ENCODE measurements at regions of chr2 and their contacts with region 1.

Region 1: DNA sequence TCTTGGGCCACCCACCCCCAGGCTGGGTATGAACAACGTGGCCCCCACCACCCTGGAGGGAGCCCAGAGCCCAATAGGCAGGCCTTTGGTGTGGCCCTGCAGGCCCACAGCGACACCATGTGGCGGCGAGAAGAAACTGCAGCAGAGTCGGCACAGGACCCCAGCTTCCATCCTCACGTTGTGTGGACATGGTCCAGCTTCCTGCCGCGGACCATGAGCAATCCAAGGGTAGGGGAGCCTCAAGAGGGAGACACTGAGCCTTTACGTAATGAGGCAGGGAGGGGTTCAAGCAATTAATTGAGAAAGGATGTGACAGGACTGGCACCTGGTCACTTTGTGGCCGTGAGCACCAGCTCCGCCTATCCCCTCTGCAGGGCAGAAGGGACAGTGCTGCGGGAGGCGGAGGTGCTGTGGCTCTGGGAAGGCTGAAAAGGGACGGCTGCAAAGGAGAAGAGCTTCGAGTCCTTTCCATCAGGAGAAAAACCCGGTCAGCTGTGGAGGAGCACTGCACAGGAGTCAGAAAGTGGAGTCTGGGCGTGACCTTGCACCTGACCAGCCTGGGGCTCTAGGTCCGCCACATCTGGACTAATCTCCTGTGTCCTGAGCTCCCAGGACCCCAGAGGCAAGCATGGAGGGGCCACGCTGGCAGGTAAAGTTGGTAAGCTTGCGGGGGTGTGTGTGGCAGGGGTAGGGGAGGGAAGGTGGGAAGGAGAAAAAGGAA is 44.8 kb downstream of the TMEM37 start:
- DNase-seq: peak; percentile 39
- H3K4me3 Mint-ChIP-seq: no peak overlapping the region
- H3K27ac Mint-ChIP-seq: no peak overlapping the region
- H3K4me1 Mint-ChIP-seq: no peaks in the 10 kb centered on the region
- H3K27me3 Mint-ChIP-seq: peaks cover 9% of the 10 kb centered on the region

Region 2: DNA sequence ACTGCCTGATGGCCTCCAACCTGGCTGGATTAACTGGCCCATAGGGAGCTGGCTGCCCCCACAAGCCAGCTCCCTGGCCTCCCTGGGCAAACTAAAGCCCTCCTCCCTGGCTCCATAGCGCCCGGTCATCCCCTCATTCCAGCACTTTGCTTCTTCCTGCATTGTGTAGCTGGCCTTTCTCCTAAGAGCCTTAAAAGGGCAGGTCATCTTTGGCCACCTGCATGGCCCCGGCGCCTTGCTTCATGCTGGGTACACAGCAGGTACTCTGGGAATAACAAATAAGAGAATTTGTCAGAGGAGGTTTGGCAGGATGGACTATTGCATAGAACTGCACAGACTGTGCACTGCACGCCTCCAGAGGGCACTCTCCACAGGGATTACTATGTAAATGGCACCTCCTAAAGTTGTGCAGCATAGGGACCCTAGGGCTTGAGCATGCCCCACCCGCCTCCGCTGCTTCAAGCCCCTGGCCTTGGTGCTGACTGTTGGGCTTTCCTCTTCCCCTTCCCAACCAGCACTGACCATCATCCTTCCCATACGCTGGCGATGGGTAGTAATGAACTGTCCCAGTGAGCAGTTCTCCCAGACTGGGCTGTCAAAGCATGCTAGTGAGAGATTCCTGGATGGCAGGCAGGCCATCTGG is 242.0 kb before region 1 on chr2:
- CTCF ChIA-PET with region 1: no interaction called
- intact Hi-C with region 1: loop called (anchors 1 kb)
- DNase-seq: peak; percentile 18
- H3K4me3 Mint-ChIP-seq: no peak overlapping the region
- H3K27ac Mint-ChIP-seq: no peak overlapping the region
- H3K4me1 Mint-ChIP-seq: peaks cover 3% of the 10 kb centered on the region
- H3K27me3 Mint-ChIP-seq: no peaks in the 10 kb centered on the region

Region 3: GRCh38 chr2:119290859-119291587 is 185.4 kb before region 1 on chr2:
- CTCF ChIA-PET with region 1: interaction called, 6 read pairs
- intact Hi-C with region 1: loop called (anchors 10 kb)
- DNase-seq: peak; percentile 79
- H3K4me3 Mint-ChIP-seq: no peak overlapping the region
- H3K27ac Mint-ChIP-seq: no peak overlapping the region
- H3K4me1 Mint-ChIP-seq: peaks cover 3% of the 10 kb centered on the region
- H3K27me3 Mint-ChIP-seq: no peaks in the 10 kb centered on the region

Region 4: GRCh38 chr2:119407430-119408220 is 68.8 kb before region 1 on chr2:
- CTCF ChIA-PET with region 1: interaction called, 19 read pairs
- intact Hi-C with region 1: loop called (anchors 1 kb)
- DNase-seq: peak; percentile 52
- H3K4me3 Mint-ChIP-seq: no peak overlapping the region
- H3K27ac Mint-ChIP-seq: no peak overlapping the region
- H3K4me1 Mint-ChIP-seq: no peaks in the 10 kb centered on the region
- H3K27me3 Mint-ChIP-seq: peaks cover 2% of the 10 kb centered on the region

Region 5: DNA sequence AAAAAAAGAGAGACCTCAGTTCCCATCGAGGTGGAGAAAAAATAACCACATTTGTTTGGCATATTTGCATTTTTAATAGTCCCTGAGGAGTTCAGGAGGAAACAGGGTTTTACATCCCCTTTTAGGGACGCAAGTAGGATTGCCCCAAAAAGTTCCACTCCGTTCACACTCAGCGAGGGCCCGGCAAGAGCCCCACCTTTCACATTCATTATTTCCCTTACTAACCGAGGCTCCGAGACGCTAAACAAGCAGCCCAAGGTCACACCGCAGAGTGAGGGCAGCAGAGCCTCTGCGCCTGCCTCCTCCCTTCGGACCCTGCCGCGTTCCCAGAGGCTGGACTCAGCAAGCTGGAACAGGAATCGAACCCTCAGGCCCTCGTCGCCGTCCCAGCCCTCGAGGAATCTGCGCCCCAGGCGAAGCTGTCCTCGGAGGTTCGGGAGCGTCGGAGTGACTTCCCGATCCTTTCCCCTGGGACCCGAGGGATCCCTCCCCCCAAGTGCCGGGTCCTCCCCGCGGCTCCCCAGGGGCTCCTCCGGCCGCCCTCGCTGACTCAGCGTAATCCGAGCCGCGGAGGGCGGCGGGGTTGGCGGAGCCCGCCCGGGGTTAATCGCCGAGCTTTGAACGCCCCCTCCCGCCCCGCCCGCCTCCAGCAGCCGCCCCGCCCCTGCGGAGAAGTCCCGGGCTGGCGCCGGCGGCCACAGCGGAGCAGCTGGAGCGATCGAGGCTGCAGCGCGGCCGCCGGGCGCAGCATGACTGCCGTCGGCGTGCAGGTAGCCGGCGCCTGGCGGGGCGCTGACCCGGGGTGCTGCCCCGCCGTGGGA is 45.1 kb before region 1 on chr2 and contains the start of gene TMEM37:
- CTCF ChIA-PET with region 1: no interaction called
- intact Hi-C with region 1: no loop called
- DNase-seq: peak; percentile 7
- H3K4me3 Mint-ChIP-seq: peak within 1 kb of the TSS; percentile 22
- H3K27ac Mint-ChIP-seq: no peak within 1 kb of the TSS
- H3K4me1 Mint-ChIP-seq: peaks cover 3% of the 10 kb centered on the region
- H3K27me3 Mint-ChIP-seq: peaks cover 69% of the 10 kb centered on the region
- total RNA-seq, gene TMEM37: not detected

Region 6: GRCh38 chr2:119531292-119531691 is 54.8 kb after region 1 on chr2:
- CTCF ChIA-PET with region 1: no interaction called
- intact Hi-C with region 1: no loop called
- DNase-seq: no peak
- H3K4me3 Mint-ChIP-seq: no peak overlapping the region
- H3K27ac Mint-ChIP-seq: no peak overlapping the region
- H3K4me1 Mint-ChIP-seq: no peaks in the 10 kb centered on the region
- H3K27me3 Mint-ChIP-seq: peaks cover 8% of the 10 kb centered on the region